ENCODE measurements at regions of chr16 and their contacts with region 1.

Region 1: GRCh38 chr16:89700100-89700648 is 1.3 kb downstream of the SPATA2L start:
- DNase-seq: peak; percentile 98
- ATAC-seq: peak; percentile 17
- H3K4me3 Mint-ChIP-seq: peak overlapping the region; percentile 67
- H3K27ac Mint-ChIP-seq: peak overlapping the region; percentile 25
- H3K4me1 Mint-ChIP-seq: peaks cover 27% of the 10 kb centered on the region
- H3K27me3 Mint-ChIP-seq: no peaks in the 10 kb centered on the region
- CTCF ChIP-seq: peak; percentile 88

Region 2: GRCh38 chr16:89657442-89658220 is 42.5 kb before region 1 on chr16 and contains the starts of genes CHMP1A and SPATA33:
- CTCF ChIA-PET with region 1: interaction called, 17 read pairs
- POLR2A ChIA-PET with region 1: interaction called, 8 read pairs
- intact Hi-C with region 1: no loop called
- DNase-seq: peak; percentile 92
- ATAC-seq: peak; percentile 93
- H3K4me3 Mint-ChIP-seq: peak within 1 kb of the TSS; percentile 81
- H3K27ac Mint-ChIP-seq: peak within 1 kb of the TSS; percentile 80
- H3K4me1 Mint-ChIP-seq: peaks cover 29% of the 10 kb centered on the region
- H3K27me3 Mint-ChIP-seq: no peaks in the 10 kb centered on the region
- CTCF ChIP-seq: no peak
- total RNA-seq, gene CHMP1A: 51.1 to 56.9 TPM
- total RNA-seq, gene SPATA33: 6.3 to 7.1 TPM

Region 3: DNA sequence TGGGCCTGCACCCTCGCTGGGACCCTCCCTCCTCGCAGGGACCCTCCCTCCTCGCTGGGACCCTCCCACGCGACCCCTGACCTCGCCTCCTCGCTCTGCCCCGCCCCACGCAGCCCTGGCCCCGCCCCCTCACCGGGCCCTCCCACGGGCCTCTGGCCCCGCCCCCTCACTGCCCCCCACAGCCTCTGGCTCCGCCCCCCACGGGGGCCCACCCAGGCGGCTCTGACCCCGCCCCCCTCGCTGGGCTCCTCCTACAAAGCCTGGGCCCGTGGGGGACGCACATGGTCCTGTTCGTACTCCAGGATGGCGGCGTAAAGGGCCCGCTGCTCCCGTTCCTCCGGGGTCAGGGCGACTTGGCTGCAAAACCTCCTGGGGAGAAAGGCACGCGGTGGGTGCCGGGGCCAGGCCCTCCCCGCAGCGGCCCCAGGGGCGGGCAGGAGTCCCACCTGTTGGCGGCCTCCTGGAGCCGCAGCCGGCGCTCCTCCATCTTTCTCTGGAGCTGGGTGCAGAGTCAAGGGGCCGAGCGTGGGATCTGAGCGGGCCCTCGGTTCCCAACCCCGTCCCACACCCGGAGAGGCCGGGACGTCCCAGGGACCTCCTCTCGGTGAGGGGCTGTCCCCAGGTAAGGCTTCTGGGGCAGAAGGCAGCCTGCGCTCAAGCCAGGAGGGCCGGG is 11.6 kb after region 1 on chr16:
- CTCF ChIA-PET with region 1: interaction called, 28 read pairs
- POLR2A ChIA-PET with region 1: interaction called, 8 read pairs
- intact Hi-C with region 1: no loop called
- DNase-seq: peak; percentile 81
- ATAC-seq: peak; percentile 92
- H3K4me3 Mint-ChIP-seq: peak overlapping the region; percentile 78
- H3K27ac Mint-ChIP-seq: peak overlapping the region; percentile 57
- H3K4me1 Mint-ChIP-seq: peaks cover 6% of the 10 kb centered on the region
- H3K27me3 Mint-ChIP-seq: no peaks in the 10 kb centered on the region
- CTCF ChIP-seq: no peak

Region 4: GRCh38 chr16:89761304-89761922 is 61.2 kb after region 1 on chr16:
- CTCF ChIA-PET with region 1: interaction called, 13 read pairs
- POLR2A ChIA-PET with region 1: no interaction called
- intact Hi-C with region 1: no loop called
- DNase-seq: no peak
- ATAC-seq: no peak
- H3K4me3 Mint-ChIP-seq: peak overlapping the region; percentile 70
- H3K27ac Mint-ChIP-seq: peak overlapping the region; percentile 81
- H3K4me1 Mint-ChIP-seq: peaks cover 30% of the 10 kb centered on the region
- H3K27me3 Mint-ChIP-seq: no peaks in the 10 kb centered on the region
- CTCF ChIP-seq: no peak

Region 5: DNA sequence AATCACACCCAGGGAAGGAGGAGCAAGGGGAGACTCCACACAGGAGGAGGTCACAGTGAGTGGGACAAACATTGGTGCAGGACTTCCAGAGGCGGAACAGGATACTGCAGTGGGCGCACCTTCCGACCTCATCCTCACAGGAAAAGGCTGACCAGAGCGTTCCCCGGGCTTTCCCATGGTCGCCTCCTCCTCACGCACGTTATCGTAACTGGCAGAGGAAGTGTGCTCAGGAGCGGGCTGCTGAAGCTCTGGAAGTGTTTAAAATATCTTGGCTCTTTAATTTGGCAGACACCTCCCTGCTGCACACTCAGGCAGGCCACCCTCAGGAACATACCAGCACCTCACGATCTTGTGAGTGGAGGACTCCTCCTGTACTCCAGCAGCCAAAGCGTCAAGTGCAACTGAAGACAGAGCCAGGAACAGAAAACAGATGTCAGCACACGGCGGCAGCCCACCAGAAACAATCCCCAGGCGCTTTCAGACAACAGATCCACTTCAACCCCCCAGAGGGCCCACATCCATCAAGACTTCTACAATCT is 98.7 kb after region 1 on chr16:
- CTCF ChIA-PET with region 1: interaction called, 58 read pairs
- POLR2A ChIA-PET with region 1: no interaction called
- intact Hi-C with region 1: loop called (anchors 10 kb)
- DNase-seq: no peak
- ATAC-seq: no peak
- H3K4me3 Mint-ChIP-seq: no peak overlapping the region
- H3K27ac Mint-ChIP-seq: no peak overlapping the region
- H3K4me1 Mint-ChIP-seq: no peaks in the 10 kb centered on the region
- H3K27me3 Mint-ChIP-seq: no peaks in the 10 kb centered on the region
- CTCF ChIP-seq: no peak

Region 6: GRCh38 chr16:89873972-89874689 is 174.0 kb after region 1 on chr16:
- CTCF ChIA-PET with region 1: interaction called, 21 read pairs
- POLR2A ChIA-PET with region 1: interaction called, 11 read pairs
- intact Hi-C with region 1: no loop called
- DNase-seq: peak; percentile 98
- ATAC-seq: peak; percentile 86
- H3K4me3 Mint-ChIP-seq: peak overlapping the region; percentile 81
- H3K27ac Mint-ChIP-seq: peak overlapping the region; percentile 97
- H3K4me1 Mint-ChIP-seq: peaks cover 16% of the 10 kb centered on the region
- H3K27me3 Mint-ChIP-seq: no peaks in the 10 kb centered on the region
- CTCF ChIP-seq: no peak